B cell (primary cell): ENCODE measurements at regions of chr5 and their contacts with region 1.

Region 1: GRCh38 chr5:169945831-169946261 is 34.4 kb downstream of the INSYN2B start:
- DNase-seq: no peak
- ATAC-seq: no peak
- H3K4me3 ChIP-seq: no peak overlapping the region
- H3K4me3 Mint-ChIP-seq: no peak overlapping the region
- H3K27ac ChIP-seq: no peak overlapping the region
- H3K27ac Mint-ChIP-seq: no peak overlapping the region
- H3K4me1 ChIP-seq: no peaks in the 10 kb centered on the region
- H3K4me1 Mint-ChIP-seq: peaks cover 13% of the 10 kb centered on the region
- H3K27me3 ChIP-seq: no peaks in the 10 kb centered on the region
- H3K27me3 Mint-ChIP-seq: no peaks in the 10 kb centered on the region
- CTCF ChIP-seq: no peak

Region 2: GRCh38 chr5:169458221-169458620 is 487.6 kb before region 1 on chr5:
- CTCF ChIA-PET with region 1: no interaction called
- POLR2A ChIA-PET with region 1: no interaction called
- intact Hi-C with region 1: no loop called
- DNase-seq: no peak
- ATAC-seq: no peak
- H3K4me3 ChIP-seq: no peak overlapping the region
- H3K4me3 Mint-ChIP-seq: no peak overlapping the region
- H3K27ac ChIP-seq: no peak overlapping the region
- H3K27ac Mint-ChIP-seq: no peak overlapping the region
- H3K4me1 ChIP-seq: no peaks in the 10 kb centered on the region
- H3K4me1 Mint-ChIP-seq: no peaks in the 10 kb centered on the region
- H3K27me3 ChIP-seq: no peaks in the 10 kb centered on the region
- H3K27me3 Mint-ChIP-seq: peaks cover 32% of the 10 kb centered on the region
- CTCF ChIP-seq: no peak

Region 3: GRCh38 chr5:169934990-169935389 is 10.9 kb before region 1 on chr5:
- CTCF ChIA-PET with region 1: no interaction called
- POLR2A ChIA-PET with region 1: interaction called, 10 read pairs
- intact Hi-C with region 1: no loop called
- DNase-seq: no peak
- ATAC-seq: no peak
- H3K4me3 ChIP-seq: no peak overlapping the region
- H3K4me3 Mint-ChIP-seq: no peak overlapping the region
- H3K27ac ChIP-seq: peak overlapping the region in 1 of 2 donors; percentile 23
- H3K27ac Mint-ChIP-seq: peak overlapping the region; percentile 2
- H3K4me1 ChIP-seq: peaks cover 10 to 12% of the 10 kb centered on the region in 2 donors
- H3K4me1 Mint-ChIP-seq: peaks cover 39% of the 10 kb centered on the region
- H3K27me3 ChIP-seq: no peaks in the 10 kb centered on the region
- H3K27me3 Mint-ChIP-seq: no peaks in the 10 kb centered on the region
- CTCF ChIP-seq: no peak

Region 4: GRCh38 chr5:170028124-170028523 is 82.3 kb after region 1 on chr5:
- CTCF ChIA-PET with region 1: no interaction called
- POLR2A ChIA-PET with region 1: no interaction called
- intact Hi-C with region 1: no loop called
- DNase-seq: no peak
- ATAC-seq: no peak
- H3K4me3 ChIP-seq: no peak overlapping the region
- H3K4me3 Mint-ChIP-seq: no peak overlapping the region
- H3K27ac ChIP-seq: no peak overlapping the region
- H3K27ac Mint-ChIP-seq: no peak overlapping the region
- H3K4me1 ChIP-seq: no peaks in the 10 kb centered on the region
- H3K4me1 Mint-ChIP-seq: no peaks in the 10 kb centered on the region
- H3K27me3 ChIP-seq: no peaks in the 10 kb centered on the region
- H3K27me3 Mint-ChIP-seq: no peaks in the 10 kb centered on the region
- CTCF ChIP-seq: no peak